ENCODE measurements at regions of chr21 and their contacts with region 1.

Region 1: GRCh38 chr21:45277101-45278045 is 10.3 kb downstream of the POFUT2 start:
- DNase-seq: peak; percentile 8 to 41 (median 22)
- H3K4me3 ChIP-seq: no peak overlapping the region
- H3K27ac ChIP-seq: no peak overlapping the region
- H3K4me1 ChIP-seq: no peaks in the 10 kb centered on the region
- H3K27me3 ChIP-seq: no peaks in the 10 kb centered on the region
- CTCF ChIP-seq: no peak
- EP300 ChIP-seq: no peak
- POLR2A ChIP-seq: no peak

Region 2: GRCh38 chr21:45228171-45228641 is 49.2 kb before region 1 on chr21:
- intact Hi-C with region 1: loop called in 1 of 4 experiments (anchors 5 kb)
- DNase-seq: no peak
- H3K4me3 ChIP-seq: no peak overlapping the region
- H3K27ac ChIP-seq: no peak overlapping the region
- H3K4me1 ChIP-seq: no peaks in the 10 kb centered on the region
- H3K27me3 ChIP-seq: no peaks in the 10 kb centered on the region
- CTCF ChIP-seq: no peak
- EP300 ChIP-seq: no peak
- POLR2A ChIP-seq: no peak